Activated CD8-positive, alpha-beta memory T cell treated with anti-CD3 and anti-CD28 coated beads, Interleukin-2, amount 10 ng/mL, durations not matched to agents 7 days and 5 days (primary cell): ENCODE measurements at regions of chr2 and their contacts with region 1.

Region 1: GRCh38 chr2:68709421-68709911 is 25.1 kb upstream of the ARHGAP25 start:
- DNase-seq: no peak
- ATAC-seq: peak; percentile 82
- H3K4me3 Mint-ChIP-seq: no peak overlapping the region
- H3K27ac Mint-ChIP-seq: peak overlapping the region; percentile 7
- H3K4me1 Mint-ChIP-seq: peaks cover 26% of the 10 kb centered on the region
- H3K27me3 Mint-ChIP-seq: peaks cover 2% of the 10 kb centered on the region

Region 2: GRCh38 chr2:68441179-68441993 is 268.1 kb before region 1 on chr2:
- CTCF ChIA-PET with region 1: no interaction called
- DNase-seq: peak; percentile 94
- ATAC-seq: peak; percentile 96
- H3K4me3 Mint-ChIP-seq: no peak overlapping the region
- H3K27ac Mint-ChIP-seq: peak overlapping the region; percentile 84
- H3K4me1 Mint-ChIP-seq: peaks cover 23% of the 10 kb centered on the region
- H3K27me3 Mint-ChIP-seq: peaks cover 6% of the 10 kb centered on the region

Region 3: GRCh38 chr2:68487773-68488355 is 221.6 kb before region 1 on chr2:
- CTCF ChIA-PET with region 1: interaction called, 13 read pairs
- DNase-seq: no peak
- ATAC-seq: no peak
- H3K4me3 Mint-ChIP-seq: no peak overlapping the region
- H3K27ac Mint-ChIP-seq: no peak overlapping the region
- H3K4me1 Mint-ChIP-seq: peaks cover 3% of the 10 kb centered on the region
- H3K27me3 Mint-ChIP-seq: no peaks in the 10 kb centered on the region

Region 4: DNA sequence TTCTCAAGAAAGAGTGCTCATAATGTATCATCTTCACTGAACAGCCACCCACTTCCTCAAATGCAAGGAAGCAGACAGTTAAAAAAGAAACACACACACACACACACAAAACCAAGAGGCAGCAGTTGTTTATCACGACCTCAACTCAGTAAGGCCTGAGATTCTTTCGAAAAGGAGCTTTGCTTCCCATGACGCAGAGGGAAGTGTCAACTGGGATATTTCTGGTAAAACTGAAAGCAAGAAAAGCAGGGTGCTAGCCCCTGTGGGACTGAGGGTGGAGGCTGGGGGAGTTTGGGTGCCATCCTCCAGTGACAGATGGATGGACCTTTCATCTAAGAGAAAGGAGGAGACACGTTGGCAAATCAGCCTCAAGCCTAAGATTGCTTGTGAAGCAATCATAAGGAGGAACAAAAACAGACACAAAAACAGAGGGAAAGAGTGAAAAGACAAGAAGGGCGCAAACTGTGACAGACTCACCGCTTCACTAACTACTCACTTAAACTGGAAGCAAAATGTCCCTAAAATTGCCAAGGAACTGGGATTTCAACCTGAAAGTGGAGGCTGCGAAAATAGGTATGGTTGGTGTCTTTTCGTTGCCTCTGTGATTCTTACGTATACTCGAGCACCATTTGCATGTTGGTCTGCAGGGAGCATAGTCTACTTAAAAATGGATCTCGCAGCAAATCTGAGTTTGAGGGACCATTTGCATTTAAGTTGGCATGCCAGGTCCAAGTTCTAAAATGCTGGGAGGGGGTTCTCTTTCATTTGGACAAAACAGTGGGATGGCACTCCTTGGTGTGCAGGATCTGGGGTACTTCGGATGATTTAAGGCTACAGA is 25.4 kb after region 1 on chr2 and contains the start of gene ARHGAP25:
- CTCF ChIA-PET with region 1: interaction called, 12 read pairs
- DNase-seq: peak; percentile 80
- ATAC-seq: peak; percentile 64
- H3K4me3 Mint-ChIP-seq: no peak within 1 kb of the TSS
- H3K27ac Mint-ChIP-seq: no peak within 1 kb of the TSS
- H3K4me1 Mint-ChIP-seq: peaks cover 35% of the 10 kb centered on the region
- H3K27me3 Mint-ChIP-seq: no peaks in the 10 kb centered on the region
- total RNA-seq, gene ARHGAP25: 90.2 to 126 TPM

Region 5: DNA sequence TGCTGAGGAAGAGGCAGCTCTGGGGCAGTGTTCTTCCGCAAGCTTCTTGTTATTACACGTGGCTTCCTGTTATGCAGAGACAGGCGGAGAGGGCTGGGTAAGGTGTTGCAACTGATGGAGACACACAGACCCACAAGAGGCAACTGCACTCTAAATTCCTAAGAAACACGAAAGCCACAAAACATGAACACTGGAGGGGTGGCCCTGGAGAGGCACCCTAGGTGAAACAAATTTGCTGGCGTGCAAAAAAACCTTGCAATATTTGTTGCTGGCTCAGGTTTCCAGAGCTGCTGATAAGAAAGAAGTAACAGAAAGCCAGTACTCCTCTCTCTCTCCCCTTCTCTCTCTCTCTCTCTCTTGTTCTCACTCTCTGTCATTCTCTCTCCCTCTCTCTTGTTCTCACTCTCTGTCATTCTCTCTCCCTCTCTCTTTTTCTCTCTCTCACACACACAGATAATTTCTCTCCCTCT is 56.9 kb after region 1 on chr2:
- CTCF ChIA-PET with region 1: interaction called, 15 read pairs
- DNase-seq: peak; percentile 89
- ATAC-seq: peak; percentile 71
- H3K4me3 Mint-ChIP-seq: peak overlapping the region; percentile 76
- H3K27ac Mint-ChIP-seq: peak overlapping the region; percentile 100
- H3K4me1 Mint-ChIP-seq: peaks cover 94% of the 10 kb centered on the region
- H3K27me3 Mint-ChIP-seq: no peaks in the 10 kb centered on the region

Region 6: DNA sequence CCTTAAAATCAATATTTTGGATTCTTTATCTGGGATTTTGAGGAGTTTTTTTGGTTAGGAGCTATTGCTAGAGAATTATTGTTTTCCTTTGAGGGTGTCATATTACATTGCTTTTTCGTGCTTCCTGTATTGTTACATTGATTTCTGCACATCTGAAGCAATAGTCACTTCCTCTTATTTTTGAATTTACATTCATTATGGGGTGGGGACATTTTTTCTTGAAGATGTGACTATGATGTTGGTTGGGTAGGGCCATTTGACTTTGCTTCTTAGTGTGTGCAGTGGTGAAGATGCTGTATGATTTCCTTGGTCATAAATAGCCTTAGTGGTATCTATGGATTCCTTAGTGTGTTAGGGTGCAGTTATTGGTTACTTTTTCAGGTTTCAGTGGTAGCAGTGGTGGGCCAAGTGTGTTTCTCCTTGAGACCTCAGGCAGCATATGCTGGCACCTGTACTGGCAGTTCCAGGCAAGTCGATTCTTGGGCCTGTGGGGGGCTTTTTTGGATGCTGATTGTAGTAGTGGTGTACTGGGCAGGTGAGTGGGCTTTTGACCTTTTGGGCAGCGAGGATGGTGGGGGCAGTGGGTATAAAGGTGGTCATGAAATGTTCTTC is 86.9 kb after region 1 on chr2:
- CTCF ChIA-PET with region 1: no interaction called
- DNase-seq: no peak
- ATAC-seq: peak; percentile 67
- H3K4me3 Mint-ChIP-seq: peak overlapping the region; percentile 1
- H3K27ac Mint-ChIP-seq: peak overlapping the region; percentile 77
- H3K4me1 Mint-ChIP-seq: peaks cover 50% of the 10 kb centered on the region
- H3K27me3 Mint-ChIP-seq: no peaks in the 10 kb centered on the region

Region 7: GRCh38 chr2:68909793-68910674 is 200.6 kb after region 1 on chr2:
- CTCF ChIA-PET with region 1: interaction called, 42 read pairs
- DNase-seq: peak; percentile 89
- ATAC-seq: no peak
- H3K4me3 Mint-ChIP-seq: no peak overlapping the region
- H3K27ac Mint-ChIP-seq: peak overlapping the region; percentile 77
- H3K4me1 Mint-ChIP-seq: peaks cover 40% of the 10 kb centered on the region
- H3K27me3 Mint-ChIP-seq: no peaks in the 10 kb centered on the region